Right cardiac atrium (tissue), 5 donors: ENCODE measurements at regions of chr10 and their contacts with region 1.

Region 1: GRCh38 chr10:25026463-25026862 is 10.1 kb downstream of the THNSL1 start:
- DNase-seq: no peak
- ATAC-seq: no peak
- H3K4me3 ChIP-seq: no peak overlapping the region
- H3K27ac ChIP-seq: no peak overlapping the region
- H3K4me1 ChIP-seq: no peaks in the 10 kb centered on the region
- H3K27me3 ChIP-seq: no peaks in the 10 kb centered on the region

Region 2: GRCh38 chr10:25080880-25081581 is 54.6 kb after region 1 on chr10:
- intact Hi-C with region 1: loop called in 2 of 4 experiments (anchors 10 kb)
- DNase-seq: peak; percentile 76 to 88 (median 80)
- ATAC-seq: peak; percentile 95 to 96
- H3K4me3 ChIP-seq: no peak overlapping the region
- H3K27ac ChIP-seq: no peak overlapping the region
- H3K4me1 ChIP-seq: no peaks in the 10 kb centered on the region
- H3K27me3 ChIP-seq: no peaks in the 10 kb centered on the region

Region 3: GRCh38 chr10:25157650-25158049 is 131.2 kb after region 1 on chr10:
- intact Hi-C with region 1: no loop called
- DNase-seq: no peak
- ATAC-seq: no peak
- H3K4me3 ChIP-seq: no peak overlapping the region
- H3K27ac ChIP-seq: no peak overlapping the region
- H3K4me1 ChIP-seq: no peaks in the 10 kb centered on the region
- H3K27me3 ChIP-seq: no peaks in the 10 kb centered on the region